Naive thymus-derived CD4-positive, alpha-beta T cell (primary cell): ENCODE measurements at regions of chr1 and their contacts with region 1.

Region 1: DNA sequence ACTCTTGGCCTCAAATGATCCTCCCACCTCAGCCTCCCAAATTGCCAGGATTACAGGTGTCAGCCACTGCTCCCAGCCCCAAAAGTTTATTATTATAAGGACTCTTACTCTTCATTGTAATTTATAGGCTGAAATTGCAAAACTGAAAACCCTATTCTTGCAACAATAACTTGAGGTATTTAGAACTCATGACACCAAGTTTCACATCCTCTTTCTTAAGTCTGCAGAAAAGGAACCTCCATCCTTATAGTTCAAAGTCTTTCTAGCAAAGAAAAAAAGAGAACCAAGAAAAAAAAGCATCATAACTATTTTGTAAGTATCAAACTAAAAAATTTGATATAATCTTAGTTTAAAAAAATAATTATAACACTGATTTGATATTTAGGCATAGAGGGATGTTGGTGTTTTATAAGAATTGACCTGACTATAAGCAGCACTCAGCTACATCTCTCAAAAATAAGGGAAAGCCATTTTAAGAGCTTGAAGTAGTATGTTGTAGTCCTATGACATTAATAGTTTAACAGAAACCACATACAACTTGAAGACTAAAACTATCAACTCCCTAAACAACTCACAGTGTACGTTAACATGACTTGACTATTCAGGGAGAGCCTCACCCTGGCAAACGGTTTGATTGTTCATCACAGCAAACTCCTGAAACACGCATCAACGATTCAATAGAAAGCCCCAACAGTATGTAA is 122.4 kb downstream of the AKT3 start:
- DNase-seq: no peak
- ATAC-seq: peak; percentile 61
- H3K4me3 ChIP-seq: no peak overlapping the region
- H3K4me3 Mint-ChIP-seq: no peak overlapping the region
- H3K27ac ChIP-seq: no peak overlapping the region
- H3K27ac Mint-ChIP-seq: peak overlapping the region in 1 of 9 donors; percentile 69
- H3K4me1 ChIP-seq: no peaks in the 10 kb centered on the region
- H3K4me1 Mint-ChIP-seq: peaks cover 3 to 75% (median 61%) of the 10 kb centered on the region in 7 donors
- H3K27me3 ChIP-seq: no peaks in the 10 kb centered on the region
- H3K27me3 Mint-ChIP-seq: no peaks in the 10 kb centered on the region

Region 2: DNA sequence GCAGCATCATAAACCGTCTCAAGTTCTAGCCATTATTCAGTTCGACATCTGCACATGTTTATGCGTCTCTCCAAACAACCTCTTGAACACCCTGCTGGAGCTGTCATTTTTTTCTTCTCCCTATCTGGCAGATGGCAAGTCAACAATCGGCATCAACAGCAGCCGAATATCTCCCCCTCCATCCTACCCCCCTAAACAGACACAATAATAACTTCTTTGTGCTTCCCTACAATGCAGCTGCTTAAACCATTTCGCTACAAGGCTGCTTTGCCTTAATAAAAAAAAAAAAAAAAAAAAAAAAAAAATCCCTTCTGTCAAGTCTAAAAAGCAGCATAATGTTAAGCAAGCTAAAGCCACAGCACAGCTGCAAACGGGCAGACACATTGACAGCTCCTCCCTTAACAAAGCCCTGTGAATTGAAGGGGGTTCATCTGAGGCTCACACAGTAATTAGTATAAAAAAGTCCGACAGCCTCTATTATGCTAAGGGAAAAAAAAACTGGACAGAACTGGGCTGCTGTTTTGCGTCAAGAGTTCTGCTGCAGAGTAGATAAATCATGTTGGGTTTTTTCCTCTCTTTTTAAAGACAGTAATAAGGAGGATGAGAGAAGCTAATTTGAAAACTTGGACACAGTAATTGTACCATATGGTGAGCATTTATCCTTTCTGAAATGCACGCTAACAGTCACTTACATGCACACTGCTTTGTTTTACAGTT is 14.0 kb before region 1 on chr1:
- CTCF ChIA-PET with region 1: no interaction called
- POLR2A ChIA-PET with region 1: no interaction called
- intact Hi-C with region 1: loop called in 1 of 2 experiments (anchors 2 kb)
- DNase-seq: no peak
- ATAC-seq: peak; percentile 64
- H3K4me3 ChIP-seq: no peak overlapping the region
- H3K4me3 Mint-ChIP-seq: peak overlapping the region in 8 of 10 donors; percentile 6 to 63 (median 34)
- H3K27ac ChIP-seq: no peak overlapping the region
- H3K27ac Mint-ChIP-seq: peak overlapping the region in 2 of 9 donors; percentile 14 to 69
- H3K4me1 ChIP-seq: no peaks in the 10 kb centered on the region
- H3K4me1 Mint-ChIP-seq: peaks cover 5 to 79% (median 59%) of the 10 kb centered on the region in 7 donors
- H3K27me3 ChIP-seq: no peaks in the 10 kb centered on the region
- H3K27me3 Mint-ChIP-seq: no peaks in the 10 kb centered on the region